MCF 10A (cell line): ENCODE measurements at regions of chr10 and their contacts with region 1.

Region 1: DNA sequence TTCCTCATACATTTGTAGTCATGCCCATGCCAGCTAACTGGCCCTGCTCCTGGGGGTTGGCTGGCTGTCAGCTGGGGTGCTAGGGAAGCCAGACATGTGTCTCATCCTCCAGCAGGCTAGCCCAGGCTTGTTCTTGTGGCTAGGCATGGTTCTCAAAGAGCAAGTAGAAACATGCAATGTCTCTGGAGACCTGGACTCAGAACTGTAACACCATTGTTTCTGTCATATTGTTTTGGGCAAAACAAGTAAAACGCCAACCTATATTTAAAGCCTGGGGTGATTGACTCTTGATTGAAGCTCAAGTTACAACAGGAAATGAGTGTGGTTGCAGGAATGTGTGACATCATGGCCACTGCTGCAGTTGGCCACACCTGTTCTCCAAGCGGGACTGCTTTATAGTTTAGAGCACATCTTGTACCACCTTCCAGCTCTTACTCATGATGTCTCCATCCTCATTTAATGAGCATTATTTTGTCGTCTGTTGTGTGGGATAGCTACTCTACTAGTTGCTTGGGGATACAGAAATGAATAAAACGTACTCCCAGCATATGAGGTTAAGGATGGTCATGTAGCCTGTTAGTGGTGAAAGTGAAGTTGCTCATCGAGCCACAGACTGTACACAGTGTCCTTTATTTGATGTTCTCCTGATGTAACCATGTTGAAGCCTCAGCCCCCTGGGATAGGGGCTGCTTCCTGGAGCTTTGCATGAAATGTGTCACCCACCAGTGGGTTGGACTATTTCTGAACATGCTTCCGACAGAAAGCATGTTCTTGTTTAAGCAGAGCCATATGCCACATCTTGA is 168.4 kb downstream of the SORCS3 start:
- DNase-seq: peak; percentile 99
- H3K4me3 Mint-ChIP-seq: no peak overlapping the region
- H3K27ac Mint-ChIP-seq: peak overlapping the region; percentile 91
- H3K4me1 Mint-ChIP-seq: peaks cover 34% of the 10 kb centered on the region
- H3K27me3 Mint-ChIP-seq: no peaks in the 10 kb centered on the region
- CTCF ChIP-seq: no peak

Region 2: GRCh38 chr10:104680467-104681401 is 128.8 kb before region 1 on chr10:
- CTCF ChIA-PET with region 1: no interaction called
- POLR2A ChIA-PET with region 1: no interaction called
- intact Hi-C with region 1: no loop called
- DNase-seq: no peak
- H3K4me3 Mint-ChIP-seq: no peak overlapping the region
- H3K27ac Mint-ChIP-seq: no peak overlapping the region
- H3K4me1 Mint-ChIP-seq: no peaks in the 10 kb centered on the region
- H3K27me3 Mint-ChIP-seq: peaks cover 11% of the 10 kb centered on the region
- CTCF ChIP-seq: no peak

Region 3: DNA sequence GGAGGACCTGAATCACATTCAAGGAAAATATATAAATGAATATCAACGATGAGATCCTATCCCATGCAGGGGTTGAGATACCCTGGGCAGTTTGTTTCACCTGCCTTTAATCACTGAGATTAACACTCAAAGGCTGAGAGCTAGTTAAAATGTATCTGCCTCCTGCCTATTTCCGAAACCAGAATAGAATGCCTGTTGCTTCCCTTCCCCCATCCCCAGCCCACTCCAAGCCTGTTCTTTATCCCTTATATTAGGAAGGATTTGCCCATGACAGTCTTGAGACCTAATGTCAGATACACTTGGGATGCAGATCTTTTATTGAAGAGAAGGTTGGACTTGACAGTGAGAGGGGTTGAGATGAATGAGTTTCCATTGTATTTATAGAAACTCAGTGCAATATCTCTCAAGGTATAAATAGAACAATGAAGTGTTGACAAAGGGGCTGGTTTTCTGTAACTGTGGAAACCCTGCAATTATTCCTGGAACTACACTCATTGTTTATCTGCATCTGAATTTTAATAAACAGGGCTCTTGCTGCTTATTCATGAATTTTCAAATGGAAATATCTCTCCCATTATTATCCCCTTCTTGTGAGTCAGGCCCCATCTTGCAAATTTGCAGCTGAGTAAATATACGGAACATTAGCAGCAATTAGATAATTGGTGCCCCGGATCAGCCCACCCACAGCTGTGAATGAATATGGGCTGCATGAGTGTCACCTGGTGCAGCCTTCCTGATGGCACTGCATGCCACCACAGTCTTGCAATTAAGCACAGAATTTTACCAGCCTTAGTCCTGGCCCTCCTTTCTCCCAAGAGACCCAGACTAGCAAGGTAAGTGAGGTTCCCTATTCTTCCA is 101.7 kb before region 1 on chr10:
- CTCF ChIA-PET with region 1: no interaction called
- POLR2A ChIA-PET with region 1: no interaction called
- intact Hi-C with region 1: no loop called
- DNase-seq: no peak
- H3K4me3 Mint-ChIP-seq: no peak overlapping the region
- H3K27ac Mint-ChIP-seq: no peak overlapping the region
- H3K4me1 Mint-ChIP-seq: no peaks in the 10 kb centered on the region
- H3K27me3 Mint-ChIP-seq: no peaks in the 10 kb centered on the region
- CTCF ChIP-seq: no peak

Region 4: DNA sequence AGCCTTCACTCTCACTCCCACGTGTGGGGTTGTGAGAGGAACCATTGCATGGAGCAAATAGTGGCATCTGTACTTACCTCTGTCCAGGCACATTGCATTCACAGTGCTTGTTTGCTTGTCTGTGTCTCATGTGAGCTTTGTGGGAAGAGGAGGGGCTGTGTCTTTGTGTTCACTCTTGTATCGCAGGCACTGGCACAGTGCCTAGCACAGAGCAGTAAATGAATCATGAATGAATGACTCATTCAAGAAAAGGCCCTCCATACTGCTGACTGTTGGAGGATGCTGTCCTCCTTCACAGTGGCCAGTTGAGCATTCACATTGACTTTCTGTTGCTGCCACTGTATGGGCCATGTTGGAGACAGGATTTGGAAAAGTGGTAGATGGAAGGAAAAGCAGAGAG is 43.1 kb before region 1 on chr10:
- CTCF ChIA-PET with region 1: no interaction called
- POLR2A ChIA-PET with region 1: no interaction called
- intact Hi-C with region 1: loop called (anchors 2 kb)
- DNase-seq: peak; percentile 92
- H3K4me3 Mint-ChIP-seq: no peak overlapping the region
- H3K27ac Mint-ChIP-seq: peak overlapping the region; percentile 28
- H3K4me1 Mint-ChIP-seq: peaks cover 17% of the 10 kb centered on the region
- H3K27me3 Mint-ChIP-seq: no peaks in the 10 kb centered on the region
- CTCF ChIP-seq: no peak

Region 5: DNA sequence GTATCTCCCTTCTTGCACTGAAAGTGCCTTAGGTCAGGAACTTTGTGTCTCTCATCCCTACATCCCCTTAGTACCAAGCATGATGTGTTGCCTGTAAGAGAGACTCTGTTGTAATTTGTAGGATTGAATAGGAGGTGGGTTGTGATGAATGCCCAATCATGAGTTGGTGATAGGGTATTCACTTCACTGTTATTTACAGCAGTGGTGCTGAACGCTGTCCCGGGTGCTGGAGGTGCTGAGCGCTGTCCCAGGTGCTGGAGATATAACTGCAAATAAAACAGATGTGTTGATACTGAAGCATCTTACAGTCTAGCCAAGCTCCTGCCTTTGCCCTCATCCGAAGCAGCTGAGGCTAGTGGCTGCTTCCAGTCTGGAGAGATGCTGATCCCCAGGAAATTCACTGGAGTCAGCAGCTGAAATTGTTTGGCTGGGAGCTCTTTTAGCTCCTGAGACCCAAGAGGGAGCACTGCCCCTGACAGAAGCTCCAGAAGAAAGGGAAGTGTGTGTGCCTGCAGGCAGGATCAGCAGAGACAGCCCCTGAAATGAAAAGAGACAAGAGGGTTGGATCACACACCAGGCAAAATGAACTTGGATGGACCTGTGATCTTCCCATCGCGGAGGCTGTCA is 15.0 kb after region 1 on chr10:
- CTCF ChIA-PET with region 1: no interaction called
- POLR2A ChIA-PET with region 1: no interaction called
- intact Hi-C with region 1: loop called (anchors 1 kb)
- DNase-seq: peak; percentile 66
- H3K4me3 Mint-ChIP-seq: no peak overlapping the region
- H3K27ac Mint-ChIP-seq: no peak overlapping the region
- H3K4me1 Mint-ChIP-seq: peaks cover 6% of the 10 kb centered on the region
- H3K27me3 Mint-ChIP-seq: no peaks in the 10 kb centered on the region
- CTCF ChIP-seq: no peak

Region 6: DNA sequence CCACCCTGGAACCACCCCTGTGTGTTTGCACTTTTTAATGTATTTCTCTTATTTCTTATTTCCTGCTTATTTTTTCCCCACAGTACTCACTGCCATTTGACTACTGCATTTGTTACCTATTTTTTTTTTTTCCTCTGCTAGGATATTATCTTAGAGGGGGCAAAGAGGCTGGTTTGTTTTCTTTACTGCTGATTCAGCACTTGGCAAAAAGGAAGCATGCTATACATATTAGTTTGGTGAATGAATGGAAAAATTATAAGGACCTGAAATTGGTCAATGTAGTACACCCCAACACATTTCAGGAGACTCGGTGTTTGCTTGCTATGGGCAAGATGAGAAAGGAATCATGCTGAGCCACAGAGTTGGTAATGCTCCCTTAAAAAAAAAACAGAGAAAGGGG is 25.1 kb after region 1 on chr10:
- CTCF ChIA-PET with region 1: no interaction called
- POLR2A ChIA-PET with region 1: no interaction called
- intact Hi-C with region 1: no loop called
- DNase-seq: no peak
- H3K4me3 Mint-ChIP-seq: no peak overlapping the region
- H3K27ac Mint-ChIP-seq: no peak overlapping the region
- H3K4me1 Mint-ChIP-seq: peaks cover 24% of the 10 kb centered on the region
- H3K27me3 Mint-ChIP-seq: no peaks in the 10 kb centered on the region
- CTCF ChIP-seq: no peak